Ovary (tissue), 10 donors: ENCODE measurements at regions of chr5 and their contacts with region 1.

Region 1: GRCh38 chr5:36839489-36840476 is 36.8 kb upstream of the NIPBL start:
- DNase-seq: no peak
- H3K4me3 ChIP-seq: no peak overlapping the region
- H3K27ac ChIP-seq: no peak overlapping the region
- H3K4me1 ChIP-seq: peaks cover 1% of the 10 kb centered on the region
- H3K27me3 ChIP-seq: no peaks in the 10 kb centered on the region
- CTCF ChIP-seq: no peak
- EP300 ChIP-seq: no peak
- POLR2A ChIP-seq: no peak

Region 2: DNA sequence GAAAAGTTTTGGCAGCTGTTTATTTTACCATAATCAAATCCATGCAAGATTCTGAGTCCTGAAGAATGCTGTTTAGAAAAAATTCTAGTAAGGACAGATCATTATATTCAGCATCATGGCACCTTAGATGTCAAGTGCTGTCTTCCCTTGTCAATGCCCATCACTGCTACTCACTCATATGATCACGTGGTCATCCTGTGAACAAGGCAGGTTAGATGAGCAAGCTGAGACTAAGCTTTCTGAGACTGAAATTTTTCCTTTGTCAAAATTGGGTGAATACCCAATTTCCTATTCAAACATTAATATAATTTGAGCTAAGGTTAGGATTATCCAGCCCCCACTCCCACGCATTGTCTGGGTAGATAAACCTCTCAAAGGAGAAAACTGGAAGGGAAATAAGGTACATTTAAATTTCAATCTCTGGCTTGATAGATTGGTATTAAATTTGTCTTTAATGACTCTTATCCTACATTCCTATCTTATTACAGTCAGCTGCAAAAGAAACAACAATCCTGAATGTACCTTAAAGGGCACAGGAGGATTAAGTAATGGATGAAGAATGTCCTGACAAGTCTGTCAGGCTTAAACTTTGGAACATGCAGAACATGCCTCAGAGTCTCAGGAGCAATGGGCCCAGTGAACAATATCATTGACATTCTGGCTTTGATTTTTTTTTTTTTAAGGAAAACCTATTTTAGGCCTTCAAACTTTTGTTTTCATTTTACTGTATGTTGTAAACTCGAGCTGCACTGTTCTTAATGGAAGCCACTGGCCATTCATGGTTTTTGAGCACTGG is 389.4 kb before region 1 on chr5:
- intact Hi-C with region 1: loop called in 1 of 4 experiments (anchors 5 kb)
- DNase-seq: no peak
- H3K4me3 ChIP-seq: no peak overlapping the region
- H3K27ac ChIP-seq: no peak overlapping the region
- H3K4me1 ChIP-seq: no peaks in the 10 kb centered on the region
- H3K27me3 ChIP-seq: no peaks in the 10 kb centered on the region
- CTCF ChIP-seq: no peak
- EP300 ChIP-seq: no peak
- POLR2A ChIP-seq: no peak

Region 3: DNA sequence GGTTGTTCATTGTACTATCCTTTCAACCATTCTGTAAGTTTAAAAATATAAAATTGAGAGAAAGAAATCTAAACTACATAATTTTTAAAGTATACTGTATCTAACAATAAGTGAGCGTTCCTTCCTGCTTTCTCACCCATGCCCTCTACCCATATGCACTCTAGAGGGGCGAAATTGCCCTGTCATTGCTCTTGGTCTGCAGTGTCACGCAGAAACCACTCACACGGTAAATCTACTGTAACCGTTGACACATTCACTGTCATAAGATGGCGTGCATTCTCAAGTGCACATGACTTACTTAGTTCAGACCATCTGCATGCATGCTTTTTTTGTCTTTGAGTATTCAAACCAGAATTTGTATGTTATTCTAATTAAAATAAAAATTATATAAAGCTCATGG is 18.9 kb before region 1 on chr5:
- intact Hi-C with region 1: loop called in 1 of 4 experiments (anchors 1 kb)
- DNase-seq: no peak
- H3K4me3 ChIP-seq: no peak overlapping the region
- H3K27ac ChIP-seq: no peak overlapping the region
- H3K4me1 ChIP-seq: no peaks in the 10 kb centered on the region
- H3K27me3 ChIP-seq: no peaks in the 10 kb centered on the region
- CTCF ChIP-seq: no peak
- EP300 ChIP-seq: no peak
- POLR2A ChIP-seq: no peak

Region 4: DNA sequence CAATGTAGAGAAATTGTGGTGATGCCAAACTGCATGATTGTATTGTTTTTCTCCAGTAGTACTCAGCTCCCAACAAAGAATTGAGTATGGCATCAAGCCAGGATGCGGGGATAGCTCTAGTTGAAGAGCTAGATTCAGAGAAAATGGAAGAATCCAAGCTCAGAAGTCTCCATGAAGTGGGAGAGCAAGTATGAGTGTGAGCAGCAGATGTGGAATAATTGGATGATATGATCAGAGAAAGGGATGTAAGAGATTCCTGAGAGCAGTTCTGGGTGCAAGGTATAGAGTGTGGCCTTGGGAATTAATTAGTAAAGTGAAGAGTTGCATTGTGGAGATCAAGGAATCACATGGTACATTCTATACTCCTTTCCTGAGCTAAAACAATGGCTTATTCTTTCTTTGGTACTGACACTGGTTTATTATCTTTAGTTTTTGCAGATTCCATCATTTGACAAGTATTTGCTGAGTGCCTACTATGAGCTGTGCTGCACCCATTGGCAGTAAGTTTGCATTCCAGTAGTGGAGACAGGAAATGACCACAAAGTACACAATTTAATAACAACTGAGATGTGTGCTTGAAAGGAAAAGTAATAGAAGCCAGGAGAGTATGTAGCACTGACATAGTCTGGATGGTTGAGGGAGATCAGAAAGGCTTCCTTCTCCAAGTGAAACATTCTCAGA is 232.3 kb after region 1 on chr5:
- intact Hi-C with region 1: no loop called
- DNase-seq: no peak
- H3K4me3 ChIP-seq: no peak overlapping the region
- H3K27ac ChIP-seq: no peak overlapping the region
- H3K4me1 ChIP-seq: no peaks in the 10 kb centered on the region
- H3K27me3 ChIP-seq: no peaks in the 10 kb centered on the region
- CTCF ChIP-seq: no peak
- EP300 ChIP-seq: no peak
- POLR2A ChIP-seq: no peak

Region 5: GRCh38 chr5:37165761-37166160 is 326.0 kb after region 1 on chr5:
- intact Hi-C with region 1: no loop called
- DNase-seq: no peak
- H3K4me3 ChIP-seq: no peak overlapping the region
- H3K27ac ChIP-seq: no peak overlapping the region
- H3K4me1 ChIP-seq: no peaks in the 10 kb centered on the region
- H3K27me3 ChIP-seq: no peaks in the 10 kb centered on the region
- CTCF ChIP-seq: no peak
- EP300 ChIP-seq: no peak
- POLR2A ChIP-seq: no peak

Region 6: GRCh38 chr5:38373743-38374142 is 1534.0 kb after region 1 on chr5:
- intact Hi-C with region 1: no loop called
- DNase-seq: no peak
- H3K4me3 ChIP-seq: no peak overlapping the region
- H3K27ac ChIP-seq: no peak overlapping the region
- H3K4me1 ChIP-seq: peaks cover 18% of the 10 kb centered on the region
- H3K27me3 ChIP-seq: no peaks in the 10 kb centered on the region
- CTCF ChIP-seq: no peak
- EP300 ChIP-seq: no peak
- POLR2A ChIP-seq: no peak